ENCODE measurements at regions of chr17 and their contacts with region 1.

Region 1: GRCh38 chr17:29931231-29931932 is 1.4 kb upstream of the SSH2 start:
- DNase-seq: peak; percentile 78
- ATAC-seq: peak; percentile 62
- H3K4me3 ChIP-seq: no peak overlapping the region
- H3K27ac ChIP-seq: no peak overlapping the region
- H3K4me1 ChIP-seq: peaks cover 2% of the 10 kb centered on the region
- H3K27me3 ChIP-seq: no peaks in the 10 kb centered on the region
- CTCF ChIP-seq: peak; percentile 93
- POLR2A ChIP-seq: no peak
- RAD21 ChIP-seq: peak; percentile 89

Region 2: DNA sequence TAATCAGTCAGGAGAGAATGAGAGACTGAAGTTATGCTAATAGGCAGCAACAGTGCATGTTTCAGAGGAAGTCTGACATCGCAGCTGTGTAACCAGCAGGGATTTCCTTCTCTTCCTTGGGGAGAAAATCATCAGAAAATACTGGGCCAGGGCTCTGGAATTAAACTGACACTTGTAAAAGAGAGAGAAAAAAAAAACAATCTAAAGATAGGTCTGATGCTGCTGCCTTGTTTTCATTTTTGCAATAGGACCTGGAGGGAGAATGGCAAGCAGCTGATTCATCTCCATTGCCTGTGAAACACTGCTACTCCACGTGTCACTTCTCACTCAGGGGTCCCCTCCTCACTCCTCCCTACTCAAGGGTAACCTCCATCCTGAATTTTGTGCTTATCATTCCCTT is 291.0 kb before region 1 on chr17:
- CTCF ChIA-PET with region 1: interaction called, 25 read pairs
- POLR2A ChIA-PET with region 1: no interaction called
- dilution Hi-C with region 1: no loop called
- in situ Hi-C with region 1: loop called (anchors 10 kb)
- intact Hi-C with region 1: loop called (anchors 1 kb)
- DNase-seq: peak; percentile 74
- ATAC-seq: peak; percentile 18
- H3K4me3 ChIP-seq: no peak overlapping the region
- H3K27ac ChIP-seq: peak overlapping the region; percentile 48; the same call in 1 of the 2 replicates
- H3K4me1 ChIP-seq: peaks cover 20% of the 10 kb centered on the region
- H3K27me3 ChIP-seq: no peaks in the 10 kb centered on the region
- CTCF ChIP-seq: no peak
- POLR2A ChIP-seq: no peak
- RAD21 ChIP-seq: no peak

Region 3: GRCh38 chr17:29645515-29646051 is 285.8 kb before region 1 on chr17:
- CTCF ChIA-PET with region 1: interaction called, 25 read pairs
- POLR2A ChIA-PET with region 1: no interaction called
- dilution Hi-C with region 1: no loop called
- in situ Hi-C with region 1: loop called (anchors 10 kb)
- intact Hi-C with region 1: no loop called
- DNase-seq: peak; percentile 82
- ATAC-seq: peak; percentile 71
- H3K4me3 ChIP-seq: no peak overlapping the region
- H3K27ac ChIP-seq: peak overlapping the region; percentile 93; the same call in 1 of the 2 replicates
- H3K4me1 ChIP-seq: peaks cover 18% of the 10 kb centered on the region
- H3K27me3 ChIP-seq: no peaks in the 10 kb centered on the region
- CTCF ChIP-seq: no peak
- POLR2A ChIP-seq: no peak
- RAD21 ChIP-seq: no peak

Region 4: DNA sequence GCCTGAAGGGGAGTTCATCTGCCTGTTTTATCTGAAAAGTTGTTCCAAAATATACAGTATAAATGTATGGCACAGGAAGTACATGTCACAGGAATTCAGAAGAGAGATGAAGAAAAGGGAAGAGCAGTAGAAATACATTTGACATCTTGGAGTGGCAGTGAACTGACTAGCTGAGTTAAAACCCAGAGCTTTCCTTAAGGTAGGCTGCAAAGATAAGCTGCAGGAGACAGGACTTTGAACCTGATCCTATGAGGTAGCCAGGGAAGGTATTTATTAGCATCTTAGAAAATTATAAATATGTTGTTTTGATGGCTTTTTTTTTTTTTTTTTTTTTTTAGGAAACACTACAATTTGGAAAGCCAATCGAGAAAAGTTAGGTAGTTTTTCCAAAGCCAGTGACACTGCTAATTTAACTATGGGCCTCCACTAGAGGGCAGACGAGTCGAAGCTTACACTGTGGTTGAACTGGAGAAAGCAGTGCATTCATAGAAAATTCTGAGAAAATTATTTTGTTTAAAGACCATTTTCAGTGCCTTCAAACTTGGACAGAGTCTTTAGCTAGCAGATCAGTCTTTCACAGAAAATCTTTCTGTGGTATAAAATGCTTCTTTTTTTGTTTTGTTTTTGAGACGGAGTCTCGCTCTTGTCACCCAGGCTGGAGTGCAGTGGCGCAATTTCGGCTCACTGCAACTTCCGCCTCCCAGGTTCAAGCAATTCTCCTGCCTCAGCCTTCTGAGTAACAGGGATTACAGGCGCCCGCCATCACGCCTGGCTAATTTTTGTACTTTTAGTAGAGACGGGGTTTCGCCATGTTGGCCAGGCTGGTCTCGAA is 123.6 kb before region 1 on chr17:
- CTCF ChIA-PET with region 1: interaction called, 52 read pairs
- POLR2A ChIA-PET with region 1: no interaction called
- dilution Hi-C with region 1: no loop called
- in situ Hi-C with region 1: loop called (anchors 5 kb)
- intact Hi-C with region 1: loop called (anchors 1 kb)
- DNase-seq: peak; percentile 74
- ATAC-seq: peak; percentile 90
- H3K4me3 ChIP-seq: no peak overlapping the region
- H3K27ac ChIP-seq: no peak overlapping the region
- H3K4me1 ChIP-seq: peaks cover 2% of the 10 kb centered on the region; the same call in 1 of the 2 replicates
- H3K27me3 ChIP-seq: no peaks in the 10 kb centered on the region
- CTCF ChIP-seq: peak; percentile 93
- POLR2A ChIP-seq: peak; percentile 47; the same call in 1 of the 2 replicates
- RAD21 ChIP-seq: peak; percentile 98

Region 5: GRCh38 chr17:29855686-29856085 is 75.7 kb before region 1 on chr17:
- CTCF ChIA-PET with region 1: interaction called, 5 read pairs
- POLR2A ChIA-PET with region 1: interaction called, 3 read pairs
- dilution Hi-C with region 1: no loop called
- in situ Hi-C with region 1: loop called (anchors 5 kb)
- intact Hi-C with region 1: no loop called
- DNase-seq: peak; percentile 75
- ATAC-seq: peak; percentile 83
- H3K4me3 ChIP-seq: no peak overlapping the region
- H3K27ac ChIP-seq: no peak overlapping the region
- H3K4me1 ChIP-seq: peaks cover 1% of the 10 kb centered on the region; the same call in 1 of the 2 replicates
- H3K27me3 ChIP-seq: no peaks in the 10 kb centered on the region
- CTCF ChIP-seq: no peak
- POLR2A ChIP-seq: no peak
- RAD21 ChIP-seq: no peak

Region 6: DNA sequence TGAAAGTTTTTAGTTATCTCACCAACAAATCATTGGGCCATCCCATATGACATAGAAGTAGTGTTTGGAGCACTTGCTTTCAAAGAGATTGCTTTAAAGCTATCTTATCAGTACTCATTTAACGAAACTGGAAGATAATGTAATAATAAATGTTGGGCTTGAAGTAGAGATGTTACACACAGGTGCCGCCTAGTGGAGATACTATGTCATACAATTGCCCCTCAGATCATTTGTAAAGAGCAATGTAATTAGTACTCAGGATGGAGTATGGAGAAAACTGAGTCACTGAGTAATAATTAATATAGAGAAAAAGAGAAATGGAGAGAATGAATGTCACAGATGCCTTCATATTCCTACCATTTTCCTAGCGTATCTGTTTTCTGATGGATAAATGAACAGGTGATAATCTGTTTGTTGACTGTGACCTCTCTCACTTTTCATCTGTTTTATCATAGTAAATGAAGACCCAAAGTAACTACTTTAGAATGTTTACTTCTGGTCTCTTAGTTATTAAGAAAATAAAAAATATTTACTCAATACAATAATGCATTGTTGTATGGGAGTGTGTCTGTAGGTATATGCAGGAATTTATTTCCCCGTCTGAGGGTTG is 90.4 kb after region 1 on chr17:
- CTCF ChIA-PET with region 1: interaction called, 11 read pairs
- POLR2A ChIA-PET with region 1: no interaction called
- dilution Hi-C with region 1: no loop called
- in situ Hi-C with region 1: no loop called
- intact Hi-C with region 1: loop called (anchors 1 kb)
- DNase-seq: peak; percentile 61
- ATAC-seq: peak; percentile 87
- H3K4me3 ChIP-seq: no peak overlapping the region
- H3K27ac ChIP-seq: no peak overlapping the region
- H3K4me1 ChIP-seq: no peaks in the 10 kb centered on the region
- H3K27me3 ChIP-seq: peaks cover 6% of the 10 kb centered on the region; the same call in 1 of the 2 replicates
- CTCF ChIP-seq: peak; percentile 78
- POLR2A ChIP-seq: no peak
- RAD21 ChIP-seq: peak; percentile 75

Region 7: DNA sequence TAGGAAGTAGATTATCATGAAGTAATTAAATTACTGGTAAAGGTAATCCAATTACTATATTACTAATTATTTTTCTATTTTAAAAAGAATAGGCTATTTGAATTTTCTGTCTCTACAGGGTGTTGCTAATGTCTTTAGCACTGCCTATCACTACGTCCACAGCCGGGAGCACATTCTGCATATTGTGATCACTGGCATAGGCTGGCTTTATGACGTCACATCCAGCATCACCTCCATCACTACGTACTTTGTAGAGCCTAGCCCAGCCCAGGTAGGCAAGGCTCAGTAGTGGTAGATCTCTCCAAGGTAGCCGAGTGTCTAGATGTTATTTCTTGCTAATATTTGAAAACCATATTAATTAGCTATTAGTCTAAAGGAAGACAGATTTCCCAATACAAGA is 151.4 kb after region 1 on chr17:
- CTCF ChIA-PET with region 1: no interaction called
- POLR2A ChIA-PET with region 1: no interaction called
- dilution Hi-C with region 1: no loop called
- in situ Hi-C with region 1: no loop called
- intact Hi-C with region 1: no loop called
- DNase-seq: no peak
- ATAC-seq: no peak
- H3K4me3 ChIP-seq: no peak overlapping the region
- H3K27ac ChIP-seq: no peak overlapping the region
- H3K4me1 ChIP-seq: no peaks in the 10 kb centered on the region
- H3K27me3 ChIP-seq: peaks cover 40% of the 10 kb centered on the region
- CTCF ChIP-seq: no peak
- POLR2A ChIP-seq: no peak
- RAD21 ChIP-seq: no peak

Region 8: DNA sequence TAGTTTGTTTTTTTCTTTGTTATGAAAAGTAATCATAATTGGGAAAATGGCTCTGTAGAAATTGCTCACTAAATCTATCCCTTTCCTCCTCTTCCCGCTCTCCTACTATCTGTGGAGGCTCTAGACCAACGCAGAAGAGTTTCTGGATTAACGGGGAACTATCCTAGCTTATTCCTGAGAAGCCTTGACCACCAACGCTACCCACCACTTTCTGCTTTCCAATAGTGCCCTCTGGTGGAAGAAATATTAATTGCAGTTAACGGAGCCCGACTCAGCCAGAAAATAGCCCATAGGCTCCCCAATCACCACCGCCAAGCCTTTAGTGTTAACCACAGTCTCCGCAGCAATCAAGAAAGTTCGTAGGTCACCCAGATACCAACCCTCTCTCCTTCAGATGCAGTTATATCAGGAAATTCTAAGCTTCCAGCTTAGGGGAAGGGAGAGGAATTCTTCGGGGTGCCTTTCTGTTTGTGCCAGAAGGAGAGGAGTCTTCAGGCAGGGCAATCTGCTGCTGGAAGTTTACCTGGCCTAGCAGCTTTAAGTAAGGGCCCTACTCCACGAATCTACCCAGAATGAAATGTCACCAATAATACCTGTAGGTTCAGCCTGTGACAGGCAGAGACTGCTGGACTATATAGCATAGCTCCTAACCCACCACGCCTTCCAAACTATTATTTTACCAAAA is 162.2 kb after region 1 on chr17:
- CTCF ChIA-PET with region 1: interaction called, 5 read pairs
- POLR2A ChIA-PET with region 1: no interaction called
- dilution Hi-C with region 1: no loop called
- in situ Hi-C with region 1: no loop called
- intact Hi-C with region 1: loop called (anchors 1 kb)
- DNase-seq: peak; percentile 58
- ATAC-seq: peak; percentile 76
- H3K4me3 ChIP-seq: no peak overlapping the region
- H3K27ac ChIP-seq: no peak overlapping the region
- H3K4me1 ChIP-seq: peaks cover 2% of the 10 kb centered on the region
- H3K27me3 ChIP-seq: no peaks in the 10 kb centered on the region
- CTCF ChIP-seq: peak; percentile 89
- POLR2A ChIP-seq: no peak
- RAD21 ChIP-seq: peak; percentile 94